HepG2 (cell line): ENCODE measurements at regions of chr17 and their contacts with region 1.

Region 1: GRCh38 chr17:45148183-45149036 is at the start of gene HEXIM1:
- DNase-seq: peak; percentile 100
- ATAC-seq: peak; percentile 78
- H3K4me3 ChIP-seq: peak within 1 kb of the TSS; percentile 97 to 98 (median 97)
- H3K27ac ChIP-seq: peak within 1 kb of the TSS; percentile 97
- H3K4me1 ChIP-seq: peaks cover 24% of the 10 kb centered on the region
- H3K27me3 ChIP-seq: no peaks in the 10 kb centered on the region; a peak in 2 of 5 replicates
- CTCF ChIP-seq: peak; percentile 28
- EP300 ChIP-seq: peak; percentile 73 to 89
- POLR2A ChIP-seq: peak; percentile 100
- RAD21 ChIP-seq: peak; percentile 84
- total RNA-seq, gene HEXIM1: 10.5 and 14.8 TPM in 2 replicates

Region 2: GRCh38 chr17:45031231-45032173 is 116.9 kb before region 1 on chr17:
- CTCF ChIA-PET with region 1: no interaction called
- POLR2A ChIA-PET with region 1: no interaction called
- in situ Hi-C with region 1: no loop called
- intact Hi-C with region 1: no loop called
- DNase-seq: no peak
- ATAC-seq: no peak
- H3K4me3 ChIP-seq: no peak overlapping the region
- H3K27ac ChIP-seq: peak overlapping the region; percentile 55
- H3K4me1 ChIP-seq: peaks cover 31% of the 10 kb centered on the region
- H3K27me3 ChIP-seq: no peaks in the 10 kb centered on the region
- CTCF ChIP-seq: no peak
- EP300 ChIP-seq: no peak
- POLR2A ChIP-seq: no peak
- RAD21 ChIP-seq: no peak

Region 3: GRCh38 chr17:45086865-45087503 is 61.4 kb before region 1 on chr17:
- CTCF ChIA-PET with region 1: no interaction called
- POLR2A ChIA-PET with region 1: no interaction called
- in situ Hi-C with region 1: no loop called
- intact Hi-C with region 1: no loop called
- DNase-seq: no peak
- ATAC-seq: peak; percentile 23; the same call in 1 of the 3 replicates
- H3K4me3 ChIP-seq: no peak overlapping the region
- H3K27ac ChIP-seq: peak overlapping the region; percentile 19
- H3K4me1 ChIP-seq: peaks cover 23% of the 10 kb centered on the region
- H3K27me3 ChIP-seq: no peaks in the 10 kb centered on the region
- CTCF ChIP-seq: no peak
- EP300 ChIP-seq: no peak
- POLR2A ChIP-seq: no peak
- RAD21 ChIP-seq: no peak

Region 4: GRCh38 chr17:45123930-45124796 is 24.2 kb before region 1 on chr17:
- CTCF ChIA-PET with region 1: no interaction called
- POLR2A ChIA-PET with region 1: interaction called, 71 read pairs
- in situ Hi-C with region 1: no loop called
- intact Hi-C with region 1: no loop called
- DNase-seq: peak; percentile 86
- ATAC-seq: peak; percentile 79
- H3K4me3 ChIP-seq: peak overlapping the region; percentile 19 to 60 (median 29); a peak in 2 of 6 replicates
- H3K27ac ChIP-seq: peak overlapping the region; percentile 63
- H3K4me1 ChIP-seq: peaks cover 67% of the 10 kb centered on the region
- H3K27me3 ChIP-seq: no peaks in the 10 kb centered on the region
- CTCF ChIP-seq: 0 out of 2 replicates have a peak, but pooled peaks have one; percentile 5
- EP300 ChIP-seq: peak; percentile 25 to 74; a peak in 2 of 4 replicates
- POLR2A ChIP-seq: no peak
- RAD21 ChIP-seq: 0 out of 2 replicates have a peak, but pooled peaks have one; percentile 10

Region 5: GRCh38 chr17:45172454-45173286 is 24.3 kb after region 1 on chr17:
- CTCF ChIA-PET with region 1: interaction called, 10 read pairs
- POLR2A ChIA-PET with region 1: interaction called, 2,487 read pairs
- in situ Hi-C with region 1: no loop called
- intact Hi-C with region 1: no loop called
- DNase-seq: peak; percentile 97
- ATAC-seq: peak; percentile 66
- H3K4me3 ChIP-seq: peak overlapping the region; percentile 53 to 74 (median 65)
- H3K27ac ChIP-seq: peak overlapping the region; percentile 97
- H3K4me1 ChIP-seq: peaks cover 70% of the 10 kb centered on the region
- H3K27me3 ChIP-seq: no peaks in the 10 kb centered on the region
- CTCF ChIP-seq: peak; percentile 51
- EP300 ChIP-seq: peak; percentile 47 to 74; a peak in 2 of 4 replicates
- POLR2A ChIP-seq: peak; percentile 75 to 80
- RAD21 ChIP-seq: peak; percentile 69

Region 6: GRCh38 chr17:45218895-45219661 is 70.7 kb after region 1 on chr17:
- CTCF ChIA-PET with region 1: no interaction called
- POLR2A ChIA-PET with region 1: interaction called, 22 read pairs
- in situ Hi-C with region 1: no loop called
- intact Hi-C with region 1: no loop called
- DNase-seq: peak; percentile 76
- ATAC-seq: peak; percentile 79
- H3K4me3 ChIP-seq: no peak overlapping the region
- H3K27ac ChIP-seq: no peak overlapping the region
- H3K4me1 ChIP-seq: peaks cover 6% of the 10 kb centered on the region; the same call in 1 of the 2 replicates
- H3K27me3 ChIP-seq: peaks cover 17 to 44% of the 10 kb centered on the region in 2 experiments; a peak in 4 of 5 replicates
- CTCF ChIP-seq: peak; percentile 98
- EP300 ChIP-seq: no peak
- POLR2A ChIP-seq: no peak
- RAD21 ChIP-seq: peak; percentile 94

Region 7: DNA sequence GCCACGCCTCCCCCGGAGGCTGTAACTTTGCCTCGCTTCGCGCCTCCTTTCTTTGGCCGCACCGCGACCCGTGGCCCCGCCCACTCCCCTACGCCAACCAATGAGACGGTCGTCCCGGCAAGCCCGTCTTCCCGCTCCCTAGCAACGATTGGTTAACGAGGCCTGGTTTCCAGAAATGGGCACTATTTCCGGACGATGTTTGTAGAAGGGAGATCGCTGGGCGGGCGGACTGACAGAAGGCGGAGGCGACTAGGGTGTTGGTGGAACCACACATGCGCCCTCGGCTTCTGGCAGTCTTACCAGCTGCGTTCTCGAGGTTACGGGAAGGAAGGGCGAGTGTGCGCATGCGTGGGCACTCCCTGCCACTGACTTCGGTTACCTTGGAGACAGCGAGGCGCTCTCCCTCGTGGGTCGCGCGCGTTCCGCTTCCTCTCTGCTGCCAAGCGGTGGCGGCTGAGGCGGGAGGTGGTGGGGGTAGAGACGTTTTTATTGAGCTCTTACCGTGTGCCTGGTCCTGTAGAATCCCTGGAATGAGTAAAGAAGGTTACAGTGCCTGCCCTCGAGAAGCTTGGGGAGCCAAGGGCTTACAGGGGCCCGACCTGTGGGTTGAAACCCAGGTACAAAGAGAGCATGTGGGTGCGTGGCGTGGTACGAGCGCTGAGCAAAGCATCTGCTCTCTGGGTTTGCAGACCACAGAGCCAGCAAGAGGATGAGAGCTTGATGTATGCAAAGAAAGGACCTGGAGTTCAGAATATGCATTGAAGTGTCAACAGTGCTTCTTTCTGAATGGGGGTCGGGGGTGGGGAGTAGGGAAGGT is 168.9 kb after region 1 on chr17:
- CTCF ChIA-PET with region 1: no interaction called
- POLR2A ChIA-PET with region 1: interaction called, 17 read pairs
- in situ Hi-C with region 1: no loop called
- intact Hi-C with region 1: no loop called
- DNase-seq: peak; percentile 100
- ATAC-seq: peak; percentile 88
- H3K4me3 ChIP-seq: peak overlapping the region; percentile 43 to 86 (median 67)
- H3K27ac ChIP-seq: peak overlapping the region; percentile 47
- H3K4me1 ChIP-seq: peaks cover 59% of the 10 kb centered on the region
- H3K27me3 ChIP-seq: peaks cover 2 to 36% of the 10 kb centered on the region in 2 experiments; a peak in 3 of 5 replicates
- CTCF ChIP-seq: peak; percentile 37
- EP300 ChIP-seq: no peak; a peak in 1 of 4 replicates
- POLR2A ChIP-seq: peak in 1 of 2 experiments; percentile 24; a peak in 1 of 4 replicates
- RAD21 ChIP-seq: 0 out of 2 replicates have a peak, but pooled peaks have one; percentile 28

Region 8: DNA sequence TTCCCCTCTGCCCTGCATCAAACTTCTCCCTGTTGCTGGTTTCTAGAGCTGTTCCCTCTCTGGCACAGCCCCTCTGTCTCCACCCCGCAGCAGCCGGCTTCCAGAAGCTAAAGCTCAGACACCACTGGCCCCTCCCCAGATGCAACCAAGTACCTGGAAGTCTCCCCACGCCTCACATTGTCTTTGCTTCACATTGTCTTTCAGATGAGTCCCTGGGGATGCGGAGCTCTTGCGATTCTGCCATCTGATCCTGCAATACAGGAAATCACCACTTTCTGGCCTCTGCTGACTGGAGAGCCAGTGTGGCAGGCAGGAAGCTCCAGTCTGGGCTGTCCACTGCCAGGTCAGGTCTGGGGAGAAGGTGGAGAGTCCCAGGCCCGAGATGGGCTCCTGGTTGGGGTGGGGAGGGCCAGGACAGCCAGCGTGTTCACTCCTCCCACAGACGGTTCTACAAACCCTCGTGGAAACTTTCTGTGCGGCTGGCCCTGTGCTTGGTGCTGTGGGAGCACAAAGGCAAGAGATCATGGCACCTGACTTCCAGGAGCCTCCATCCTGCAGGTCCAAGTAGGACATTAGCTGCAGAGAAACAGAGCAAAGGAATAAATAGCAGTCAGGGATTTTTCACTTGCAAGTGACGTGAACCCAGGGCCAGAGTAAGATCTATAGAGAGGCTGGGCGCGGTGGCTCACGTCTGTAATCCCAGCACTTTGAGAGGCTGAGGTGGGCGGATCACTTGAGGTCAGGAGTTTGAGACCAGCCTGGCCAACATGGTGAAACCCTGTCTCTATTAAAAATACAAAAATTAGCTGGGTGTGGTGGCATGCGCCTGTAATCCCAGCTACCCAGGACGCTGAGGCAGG is 216.4 kb after region 1 on chr17:
- CTCF ChIA-PET with region 1: no interaction called
- POLR2A ChIA-PET with region 1: no interaction called
- in situ Hi-C with region 1: no loop called
- intact Hi-C with region 1: no loop called
- DNase-seq: no peak
- ATAC-seq: peak; percentile 67
- H3K4me3 ChIP-seq: no peak overlapping the region
- H3K27ac ChIP-seq: no peak overlapping the region
- H3K4me1 ChIP-seq: no peaks in the 10 kb centered on the region
- H3K27me3 ChIP-seq: peaks cover 2 to 23% of the 10 kb centered on the region in 2 experiments; a peak in 2 of 5 replicates
- CTCF ChIP-seq: no peak
- EP300 ChIP-seq: no peak
- POLR2A ChIP-seq: no peak
- RAD21 ChIP-seq: no peak